Astrocyte of the cerebellum (primary cell): ENCODE measurements at regions of chr14 and their contacts with region 1.

Region 1: GRCh38 chr14:75709207-75709812 is 48.3 kb downstream of the TTLL5 start:
- DNase-seq: peak; percentile 85
- H3K4me3 ChIP-seq: no peak overlapping the region
- CTCF ChIP-seq: peak; percentile 78

Region 2: GRCh38 chr14:75440733-75441477 is 268.4 kb before region 1 on chr14:
- in situ Hi-C with region 1: no loop called
- DNase-seq: no peak
- H3K4me3 ChIP-seq: no peak overlapping the region
- CTCF ChIP-seq: no peak

Region 3: GRCh38 chr14:75979071-75979571 is 269.8 kb after region 1 on chr14:
- in situ Hi-C with region 1: loop called (anchors 5 kb)
- DNase-seq: no peak
- H3K4me3 ChIP-seq: peak overlapping the region; percentile 62
- CTCF ChIP-seq: peak; percentile 78

Region 4: GRCh38 chr14:76133083-76133498 is 423.8 kb after region 1 on chr14:
- in situ Hi-C with region 1: loop called (anchors 25 kb)
- DNase-seq: peak; percentile 4
- H3K4me3 ChIP-seq: no peak overlapping the region
- CTCF ChIP-seq: no peak